CD4-positive, alpha-beta memory T cell (primary cell): ENCODE measurements at regions of chr2 and their contacts with region 1.

Region 1: DNA sequence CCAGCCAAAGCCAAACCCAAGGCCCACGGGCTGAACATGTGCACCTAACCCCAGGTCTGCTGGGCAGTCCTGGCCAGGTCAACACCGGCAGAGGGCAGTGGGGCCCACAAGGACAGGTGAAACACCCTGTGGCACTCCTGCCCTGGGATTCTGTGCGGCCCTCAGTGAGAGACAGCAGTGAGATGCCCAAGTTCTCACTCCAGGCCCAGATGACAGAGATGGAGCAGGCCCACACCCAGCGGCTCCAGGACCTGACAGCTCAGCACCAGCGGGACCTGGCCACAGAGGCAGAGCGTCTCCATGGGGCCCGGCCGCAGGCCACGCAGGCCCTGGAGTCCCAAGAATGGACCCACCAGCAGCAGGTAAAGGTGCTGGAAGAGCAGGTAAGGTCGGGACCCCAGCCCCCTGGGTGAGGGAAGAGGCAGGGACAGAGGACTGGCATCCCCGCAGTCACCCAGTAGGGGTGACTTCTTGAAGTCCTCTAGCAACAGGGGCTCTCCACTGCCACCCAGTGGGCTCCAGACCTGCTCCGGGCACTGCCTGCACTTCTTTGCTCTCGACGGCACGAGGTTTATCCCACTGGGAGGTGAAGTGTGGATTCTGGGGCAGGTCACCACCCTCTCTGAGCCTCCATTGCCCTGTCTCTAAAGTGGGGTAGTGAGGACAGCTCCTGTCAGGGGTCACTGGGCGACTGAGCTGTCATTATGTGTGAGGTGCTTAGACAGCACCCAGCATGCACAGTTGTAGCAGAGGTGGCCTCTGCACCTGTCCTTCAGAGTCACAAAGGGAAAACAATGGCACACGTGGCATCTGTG is 8.8 kb upstream of the SNED1 start:
- DNase-seq: no peak
- H3K4me3 ChIP-seq: no peak overlapping the region
- H3K4me3 Mint-ChIP-seq: no peak overlapping the region
- H3K27ac ChIP-seq: no peak overlapping the region
- H3K27ac Mint-ChIP-seq: peak overlapping the region in 1 of 7 donors; percentile 24
- H3K4me1 ChIP-seq: no peaks in the 10 kb centered on the region
- H3K4me1 Mint-ChIP-seq: peaks cover 0 to 3% (median under 1%) of the 10 kb centered on the region in 4 donors
- H3K27me3 ChIP-seq: no peaks in the 10 kb centered on the region
- H3K27me3 Mint-ChIP-seq: no peaks in the 10 kb centered on the region

Region 2: GRCh38 chr2:240819858-240820606 is 169.6 kb before region 1 on chr2 and contains the start of gene KIF1A:
- CTCF ChIA-PET with region 1: no interaction called
- POLR2A ChIA-PET with region 1: no interaction called
- intact Hi-C with region 1: no loop called
- DNase-seq: no peak
- H3K4me3 ChIP-seq: no peak within 1 kb of the TSS
- H3K4me3 Mint-ChIP-seq: peak within 1 kb of the TSS in 4 of 8 donors; percentile 34 to 54 (median 48)
- H3K27ac ChIP-seq: no peak within 1 kb of the TSS
- H3K27ac Mint-ChIP-seq: no peak within 1 kb of the TSS
- H3K4me1 ChIP-seq: peaks cover 8% of the 10 kb centered on the region
- H3K4me1 Mint-ChIP-seq: peaks cover 7 to 16% (median 9%) of the 10 kb centered on the region in 4 donors
- H3K27me3 ChIP-seq: peaks cover 29% of the 10 kb centered on the region
- H3K27me3 Mint-ChIP-seq: peaks cover 42 to 51% of the 10 kb centered on the region in 2 donors
- total RNA-seq, gene KIF1A: not detected

Region 3: DNA sequence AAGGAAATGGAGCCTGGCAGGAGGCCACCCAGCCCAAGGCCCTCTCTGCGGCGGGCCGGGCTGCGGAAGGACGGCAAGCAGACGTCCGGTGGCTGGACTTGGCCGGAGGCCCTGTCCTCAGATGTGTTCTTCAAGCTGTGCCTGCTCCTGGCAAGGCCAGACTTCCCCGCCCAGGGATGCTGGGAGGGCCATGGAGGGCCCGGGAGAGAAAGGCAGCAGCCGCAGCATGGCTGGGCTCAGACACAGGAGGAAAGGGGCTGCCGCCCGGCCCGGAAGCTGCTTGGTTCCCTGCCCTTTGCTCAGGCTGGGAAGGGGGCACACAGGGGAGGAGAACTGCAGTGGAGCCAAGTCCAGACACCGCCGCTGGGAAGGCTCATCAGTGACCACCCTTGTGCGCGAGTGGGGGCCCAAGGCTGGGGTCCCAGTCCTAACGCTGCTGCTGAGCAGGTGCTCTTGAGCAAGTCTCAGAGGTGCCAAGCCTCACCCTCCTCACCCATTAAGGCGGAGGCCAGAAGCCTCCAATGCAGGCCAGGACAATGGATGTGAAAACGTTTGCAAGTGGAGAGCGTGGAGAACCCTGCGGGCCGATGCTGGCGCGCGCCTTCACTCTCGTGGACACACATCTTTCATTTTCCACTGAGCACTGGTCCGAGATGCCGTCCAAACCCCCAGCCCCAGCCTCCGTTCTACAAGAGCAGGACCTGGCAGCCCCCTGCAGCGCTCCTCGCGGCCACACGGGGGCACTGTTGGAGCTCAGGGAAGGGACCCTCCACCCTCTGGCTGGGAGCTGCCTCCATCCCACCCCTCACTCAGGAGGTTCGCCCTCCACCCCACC is 75.6 kb before region 1 on chr2:
- CTCF ChIA-PET with region 1: interaction called, 3 read pairs
- POLR2A ChIA-PET with region 1: no interaction called
- intact Hi-C with region 1: loop called (anchors 2 kb)
- DNase-seq: peak in 4 of 5 donors; percentile 44 to 56 (median 50)
- H3K4me3 ChIP-seq: no peak overlapping the region
- H3K4me3 Mint-ChIP-seq: no peak overlapping the region
- H3K27ac ChIP-seq: no peak overlapping the region
- H3K27ac Mint-ChIP-seq: no peak overlapping the region
- H3K4me1 ChIP-seq: no peaks in the 10 kb centered on the region
- H3K4me1 Mint-ChIP-seq: no peaks in the 10 kb centered on the region
- H3K27me3 ChIP-seq: no peaks in the 10 kb centered on the region
- H3K27me3 Mint-ChIP-seq: peaks cover 19 to 20% of the 10 kb centered on the region in 2 donors